ENCODE measurements at regions of chr6 and their contacts with region 1.

Region 1: GRCh38 chr6:24255676-24256075 is 102.2 kb downstream of the DCDC2 start:
- DNase-seq: no peak
- H3K4me3 ChIP-seq: no peak overlapping the region
- H3K27ac ChIP-seq: no peak overlapping the region
- H3K4me1 ChIP-seq: peaks cover 2 to 12% (median 8%) of the 10 kb centered on the region in 4 experiments; a peak in 6 of 7 replicates
- H3K27me3 ChIP-seq: no peaks in the 10 kb centered on the region
- CTCF ChIP-seq: no peak
- EP300 ChIP-seq: no peak
- POLR2A ChIP-seq: no peak
- RAD21 ChIP-seq: no peak

Region 2: DNA sequence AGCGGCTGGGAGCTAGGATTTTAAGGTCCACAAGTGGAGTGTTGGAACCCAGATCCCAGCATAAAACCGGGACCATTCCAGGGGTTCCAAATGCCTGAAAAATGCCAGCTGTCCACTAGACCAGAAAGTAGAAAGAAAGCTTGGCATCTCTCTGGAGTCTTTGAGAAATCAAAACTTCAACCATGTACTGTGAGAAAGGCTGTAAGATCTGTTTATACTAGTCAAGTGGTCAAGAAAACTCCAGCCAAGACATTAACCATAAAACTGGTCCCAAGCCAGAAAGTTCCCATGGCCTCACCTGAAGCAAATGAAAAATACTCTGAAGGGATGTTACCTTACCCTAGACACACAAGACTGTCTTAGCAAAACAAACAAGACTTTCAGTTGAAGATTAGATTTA is 10.4 kb before region 1 on chr6:
- CTCF ChIA-PET with region 1: interaction called, 28 read pairs
- POLR2A ChIA-PET with region 1: interaction called, 5 read pairs
- DNase-seq: no peak
- H3K4me3 ChIP-seq: no peak overlapping the region
- H3K27ac ChIP-seq: no peak overlapping the region
- H3K4me1 ChIP-seq: peaks cover 3 to 5% (median 3%) of the 10 kb centered on the region in 4 experiments; a peak in 6 of 7 replicates
- H3K27me3 ChIP-seq: no peaks in the 10 kb centered on the region
- CTCF ChIP-seq: no peak
- EP300 ChIP-seq: no peak
- POLR2A ChIP-seq: no peak
- RAD21 ChIP-seq: no peak

Measured in H1 (cell line).